CD14-positive monocyte (primary cell): ENCODE measurements at regions of chr20 and their contacts with region 1.

Region 1: DNA sequence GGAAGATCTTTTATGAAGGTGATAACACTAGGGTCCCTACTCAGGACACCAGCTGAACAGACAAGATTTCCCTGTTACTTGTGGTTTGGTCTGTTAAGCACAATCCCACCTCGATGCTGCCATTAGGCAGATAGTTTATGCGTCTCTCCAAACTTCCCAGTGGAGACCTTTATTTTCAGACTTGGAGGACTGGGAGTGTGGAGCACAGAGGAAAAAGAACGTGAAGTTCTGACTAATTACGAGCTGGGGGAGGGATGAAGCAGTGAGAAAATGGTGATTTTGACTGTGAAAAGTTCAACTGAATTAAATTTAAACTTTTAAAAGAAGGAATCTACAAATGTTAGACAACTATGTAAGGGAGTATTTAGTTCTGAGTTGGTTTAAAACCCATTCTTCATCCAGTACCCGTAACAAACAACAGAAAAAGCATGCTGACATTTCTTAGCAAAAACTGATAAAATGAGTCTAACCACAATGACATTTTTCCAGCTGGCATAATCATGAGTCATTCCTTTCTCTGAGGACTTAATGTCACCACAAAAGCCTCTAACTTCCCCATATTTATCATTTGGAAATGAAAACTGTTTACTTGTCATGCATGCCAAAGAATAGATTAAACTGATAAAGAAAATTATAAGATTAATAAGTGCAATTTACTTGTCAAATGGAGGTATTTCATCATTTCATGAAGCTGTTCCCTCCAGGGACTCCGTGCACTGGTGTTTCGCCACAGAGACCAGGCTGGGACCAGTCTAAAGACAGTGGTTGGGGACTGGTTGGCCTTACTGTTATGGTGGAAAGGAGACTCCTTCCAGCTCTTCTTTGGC is 113.3 kb upstream of the SSTR4 start:
- DNase-seq: peak; percentile 70 to 87 (median 82)
- H3K4me3 ChIP-seq: peak overlapping the region in 1 of 3 experiments; percentile 28
- H3K4me3 Mint-ChIP-seq: peak overlapping the region in 1 of 2 donors; percentile 67
- H3K27ac ChIP-seq: no peak overlapping the region
- H3K27ac Mint-ChIP-seq: peak overlapping the region in 5 of 7 donors; percentile 54 to 85 (median 75)
- H3K4me1 ChIP-seq: peaks cover 12 to 17% of the 10 kb centered on the region in 2 donors
- H3K4me1 Mint-ChIP-seq: peaks cover 21% of the 10 kb centered on the region
- H3K27me3 ChIP-seq: peaks cover 89% of the 10 kb centered on the region in 2 donors
- H3K27me3 Mint-ChIP-seq: peaks cover 84 to 95% (median 93%) of the 10 kb centered on the region in 3 donors
- CTCF ChIP-seq: no peak

Region 2: GRCh38 chr20:22379472-22379871 is 542.3 kb before region 1 on chr20:
- intact Hi-C with region 1: no loop called
- DNase-seq: peak in 1 of 3 donors; percentile 30
- H3K4me3 ChIP-seq: no peak overlapping the region
- H3K4me3 Mint-ChIP-seq: no peak overlapping the region
- H3K27ac ChIP-seq: no peak overlapping the region
- H3K27ac Mint-ChIP-seq: no peak overlapping the region
- H3K4me1 ChIP-seq: peaks cover 6 to 17% of the 10 kb centered on the region in 2 donors
- H3K4me1 Mint-ChIP-seq: peaks cover 17% of the 10 kb centered on the region
- H3K27me3 ChIP-seq: no peaks in the 10 kb centered on the region
- H3K27me3 Mint-ChIP-seq: peaks cover 0 to 4% (median 0%) of the 10 kb centered on the region in 3 donors
- CTCF ChIP-seq: no peak

Region 3: GRCh38 chr20:23027721-23028120 is 105.9 kb after region 1 on chr20:
- intact Hi-C with region 1: loop called in 1 of 2 experiments (anchors 10 kb)
- DNase-seq: peak; percentile 44 to 85 (median 67)
- H3K4me3 ChIP-seq: peak overlapping the region in 1 of 3 experiments; percentile 37
- H3K4me3 Mint-ChIP-seq: no peak overlapping the region
- H3K27ac ChIP-seq: peak overlapping the region; percentile 55 to 67
- H3K27ac Mint-ChIP-seq: peak overlapping the region; percentile 75 to 85 (median 83)
- H3K4me1 ChIP-seq: peaks cover 42 to 56% of the 10 kb centered on the region in 2 donors
- H3K4me1 Mint-ChIP-seq: peaks cover 61% of the 10 kb centered on the region
- H3K27me3 ChIP-seq: no peaks in the 10 kb centered on the region
- H3K27me3 Mint-ChIP-seq: peaks cover 0 to 5% (median 1%) of the 10 kb centered on the region in 3 donors
- CTCF ChIP-seq: no peak

Region 4: GRCh38 chr20:23340524-23340923 is 418.7 kb after region 1 on chr20:
- intact Hi-C with region 1: loop called in 1 of 2 experiments (anchors 5 kb)
- DNase-seq: peak; percentile 30 to 58 (median 42)
- H3K4me3 ChIP-seq: no peak overlapping the region
- H3K4me3 Mint-ChIP-seq: peak overlapping the region in 1 of 2 donors; percentile 26
- H3K27ac ChIP-seq: no peak overlapping the region
- H3K27ac Mint-ChIP-seq: no peak overlapping the region
- H3K4me1 ChIP-seq: no peaks in the 10 kb centered on the region
- H3K4me1 Mint-ChIP-seq: peaks cover 2% of the 10 kb centered on the region
- H3K27me3 ChIP-seq: no peaks in the 10 kb centered on the region
- H3K27me3 Mint-ChIP-seq: peaks cover 0 to 5% (median 0%) of the 10 kb centered on the region in 3 donors
- CTCF ChIP-seq: peak; percentile 80